Activated CD8-positive, alpha-beta memory T cell treated with anti-CD3 and anti-CD28 coated beads, Interleukin-2, amount 10 ng/mL, durations not matched to agents 7 days and 5 days (primary cell): ENCODE measurements at regions of chr6 and their contacts with region 1.

Region 1: DNA sequence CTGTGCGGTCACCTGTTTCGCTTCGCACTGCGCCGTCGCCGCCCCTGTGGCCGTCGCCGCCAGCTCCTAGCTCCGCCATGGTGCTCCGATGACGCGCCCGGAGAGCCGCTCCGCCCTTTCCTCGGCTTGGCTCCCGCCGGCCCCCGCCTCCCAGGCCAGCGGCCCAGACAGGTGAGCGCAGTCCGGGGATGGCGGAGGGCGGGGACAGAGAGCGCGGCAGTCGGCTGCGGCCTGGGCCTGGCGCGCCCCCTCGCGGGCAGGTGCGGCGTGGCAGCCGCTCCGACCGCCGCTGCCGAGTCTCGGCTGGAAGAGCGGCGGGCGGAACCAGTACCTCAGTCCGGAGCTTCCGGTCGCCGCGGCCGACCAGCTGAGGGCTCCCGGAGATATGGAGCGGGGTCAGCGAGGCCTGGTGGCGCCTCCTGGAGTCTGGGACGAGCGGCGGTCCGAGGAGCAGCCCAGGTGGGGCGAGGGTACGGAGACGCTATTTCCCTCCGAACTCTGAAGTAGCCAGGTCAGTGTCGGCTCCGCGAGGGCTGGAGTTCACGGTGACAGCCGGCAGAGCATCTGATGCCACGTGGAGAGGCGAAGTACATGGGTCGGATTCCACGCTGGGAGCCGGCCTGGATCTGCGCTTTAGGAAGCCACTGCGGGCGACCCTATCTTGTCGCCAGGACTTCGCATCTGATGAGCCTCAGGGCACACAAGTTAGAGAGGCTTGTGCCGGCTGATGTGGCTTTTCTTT is at the start of gene MAP7:
- DNase-seq: peak; percentile 63
- ATAC-seq: peak; percentile 87
- H3K4me3 Mint-ChIP-seq: peak within 1 kb of the TSS; percentile 41
- H3K27ac Mint-ChIP-seq: no peak within 1 kb of the TSS
- H3K4me1 Mint-ChIP-seq: peaks cover 11% of the 10 kb centered on the region
- H3K27me3 Mint-ChIP-seq: peaks cover 55% of the 10 kb centered on the region
- total RNA-seq, gene MAP7: 0.29 to 0.59 TPM

Region 2: DNA sequence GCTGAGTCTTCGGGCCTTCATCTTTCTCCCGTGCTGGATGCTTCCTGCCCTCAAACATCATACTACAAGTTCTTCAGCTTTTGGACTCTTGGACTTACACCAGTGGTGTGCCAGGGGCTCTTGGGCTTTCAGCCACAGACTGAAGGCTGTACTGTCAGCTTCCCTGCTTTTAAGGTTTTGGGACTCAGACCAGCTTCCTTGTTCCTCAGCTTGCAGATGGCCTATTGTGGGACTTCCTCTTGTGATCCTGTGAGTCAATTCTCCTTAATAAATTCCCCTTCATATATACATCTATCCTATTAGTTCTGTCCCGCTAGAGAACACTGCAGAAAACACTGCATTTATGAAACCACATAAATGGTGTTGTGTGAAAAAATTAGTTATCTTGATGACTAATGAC is 247.0 kb before region 1 on chr6:
- CTCF ChIA-PET with region 1: no interaction called
- DNase-seq: no peak
- ATAC-seq: no peak
- H3K4me3 Mint-ChIP-seq: no peak overlapping the region
- H3K27ac Mint-ChIP-seq: no peak overlapping the region
- H3K4me1 Mint-ChIP-seq: no peaks in the 10 kb centered on the region
- H3K27me3 Mint-ChIP-seq: no peaks in the 10 kb centered on the region

Region 3: GRCh38 chr6:136446579-136447182 is 103.8 kb before region 1 on chr6:
- CTCF ChIA-PET with region 1: no interaction called
- DNase-seq: no peak
- ATAC-seq: no peak
- H3K4me3 Mint-ChIP-seq: no peak overlapping the region
- H3K27ac Mint-ChIP-seq: no peak overlapping the region
- H3K4me1 Mint-ChIP-seq: no peaks in the 10 kb centered on the region
- H3K27me3 Mint-ChIP-seq: peaks cover 33% of the 10 kb centered on the region

Region 4: DNA sequence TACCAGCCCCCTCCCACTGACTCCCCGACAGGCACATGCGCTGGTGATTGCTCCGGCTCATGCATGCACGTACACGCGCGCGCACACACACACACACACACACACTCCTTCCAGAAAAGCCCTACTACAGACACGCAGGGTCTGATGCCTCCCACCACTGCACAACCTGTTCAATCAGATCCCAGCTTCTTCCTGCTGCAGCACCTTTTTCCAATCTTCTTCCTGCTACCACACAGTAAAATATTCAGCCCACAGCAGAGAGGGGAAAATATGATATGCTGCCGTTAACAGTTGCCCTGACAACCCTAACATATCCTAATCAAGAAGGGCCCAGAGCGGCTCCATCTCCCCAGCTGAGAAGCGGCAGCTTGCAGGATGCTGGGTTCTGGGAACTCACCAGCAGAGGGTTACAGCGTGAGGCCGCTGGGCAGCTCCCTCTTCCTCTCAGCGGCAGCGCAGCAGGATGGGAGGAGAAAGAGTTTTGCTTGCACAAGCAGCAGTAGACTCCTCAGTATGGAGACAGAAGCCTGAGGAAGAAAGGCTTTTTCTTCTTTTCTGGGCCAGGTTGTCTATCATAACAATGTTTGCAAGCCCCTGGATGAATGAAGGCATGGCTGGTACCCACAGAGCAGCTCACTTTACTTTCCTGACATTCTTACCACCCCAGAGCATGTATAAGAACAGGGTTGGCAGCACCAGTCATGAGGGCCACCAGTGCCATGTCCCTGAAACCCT is 24.1 kb before region 1 on chr6:
- CTCF ChIA-PET with region 1: interaction called, 15 read pairs
- DNase-seq: peak; percentile 66
- ATAC-seq: peak; percentile 93
- H3K4me3 Mint-ChIP-seq: no peak overlapping the region
- H3K27ac Mint-ChIP-seq: no peak overlapping the region
- H3K4me1 Mint-ChIP-seq: peaks cover 19% of the 10 kb centered on the region
- H3K27me3 Mint-ChIP-seq: peaks cover 29% of the 10 kb centered on the region

Region 5: DNA sequence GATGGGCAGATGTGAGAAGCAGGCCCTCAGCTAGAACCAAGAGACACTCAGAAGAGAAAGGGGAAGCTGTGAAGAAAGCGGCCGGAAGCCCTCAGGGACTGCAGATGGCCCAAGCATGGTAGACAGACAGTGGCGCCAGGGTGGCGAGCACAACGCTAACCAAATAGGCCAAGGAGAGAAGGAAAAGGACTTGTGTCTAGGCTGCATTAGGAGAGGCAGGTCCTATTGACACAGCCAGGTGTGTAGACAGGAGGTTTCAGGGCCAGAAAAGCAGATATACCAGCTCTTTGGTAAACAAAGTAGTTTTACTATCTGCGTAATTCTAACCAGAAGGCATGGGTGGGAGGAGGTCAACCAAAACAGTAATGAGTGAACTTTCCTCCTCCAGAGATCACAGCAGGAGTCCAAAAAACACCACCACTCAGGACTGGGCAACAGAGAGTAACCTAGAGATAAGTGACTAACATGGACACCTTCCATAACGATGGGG is 15.6 kb after region 1 on chr6:
- CTCF ChIA-PET with region 1: interaction called, 35 read pairs
- DNase-seq: no peak
- ATAC-seq: no peak
- H3K4me3 Mint-ChIP-seq: no peak overlapping the region
- H3K27ac Mint-ChIP-seq: no peak overlapping the region
- H3K4me1 Mint-ChIP-seq: peaks cover 19% of the 10 kb centered on the region
- H3K27me3 Mint-ChIP-seq: no peaks in the 10 kb centered on the region